ENCODE measurements at regions of chr2 and their contacts with region 1.

Region 1: DNA sequence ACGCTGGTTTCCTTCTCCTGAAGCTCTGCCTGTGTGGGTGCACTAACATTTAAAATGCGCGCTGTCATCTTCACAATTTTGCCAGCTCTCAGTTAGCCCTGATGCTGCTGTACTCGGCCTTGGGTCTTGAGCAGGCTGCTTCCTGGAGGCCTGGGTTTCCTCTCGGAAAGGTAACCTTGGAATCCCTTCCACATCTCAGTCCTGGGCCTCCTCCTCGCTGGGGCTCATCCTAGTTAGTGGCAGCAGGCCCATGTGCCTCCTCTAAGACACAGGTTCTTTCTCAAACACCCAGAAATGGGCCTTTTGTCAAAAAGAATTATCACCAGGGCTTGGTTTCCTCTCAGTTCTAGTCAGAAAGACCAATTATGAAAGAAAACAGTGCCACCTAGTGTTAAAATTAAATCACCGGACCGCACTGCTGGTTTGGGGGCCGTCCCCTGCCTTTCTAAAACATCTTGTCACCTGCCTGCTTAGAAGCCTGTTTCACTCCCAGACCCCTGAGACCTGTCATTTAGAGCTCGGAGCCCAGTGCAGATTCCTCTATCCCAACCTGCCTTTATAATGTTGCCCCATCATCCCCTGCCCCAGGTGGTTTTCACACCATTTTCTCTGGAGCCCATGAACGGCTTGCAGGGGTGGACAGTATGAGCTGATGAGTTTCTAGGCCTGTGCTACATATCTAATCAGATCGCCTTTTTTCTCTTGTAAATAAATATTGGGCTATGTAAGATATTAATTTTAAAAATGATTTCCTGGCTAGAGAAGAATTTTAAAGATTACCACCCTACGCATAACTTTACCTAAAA is 42.4 kb downstream of the HK2 start:
- DNase-seq: no peak
- H3K4me3 ChIP-seq: no peak overlapping the region
- CTCF ChIP-seq: peak; percentile 49

Region 2: GRCh38 chr2:74602586-74603281 is 273.6 kb before region 1 on chr2:
- CTCF ChIA-PET with region 1: no interaction called
- POLR2A ChIA-PET with region 1: no interaction called
- DNase-seq: peak; percentile 21
- H3K4me3 ChIP-seq: no peak overlapping the region
- CTCF ChIP-seq: no peak

Region 3: GRCh38 chr2:74675090-74675489 is 201.2 kb before region 1 on chr2:
- CTCF ChIA-PET with region 1: interaction called, 16 read pairs
- POLR2A ChIA-PET with region 1: no interaction called
- DNase-seq: no peak
- H3K4me3 ChIP-seq: no peak overlapping the region
- CTCF ChIP-seq: no peak

Region 4: GRCh38 chr2:74696829-74697228 is 179.5 kb before region 1 on chr2:
- CTCF ChIA-PET with region 1: interaction called, 142 read pairs
- POLR2A ChIA-PET with region 1: no interaction called
- DNase-seq: no peak
- H3K4me3 ChIP-seq: no peak overlapping the region
- CTCF ChIP-seq: no peak

Region 5: DNA sequence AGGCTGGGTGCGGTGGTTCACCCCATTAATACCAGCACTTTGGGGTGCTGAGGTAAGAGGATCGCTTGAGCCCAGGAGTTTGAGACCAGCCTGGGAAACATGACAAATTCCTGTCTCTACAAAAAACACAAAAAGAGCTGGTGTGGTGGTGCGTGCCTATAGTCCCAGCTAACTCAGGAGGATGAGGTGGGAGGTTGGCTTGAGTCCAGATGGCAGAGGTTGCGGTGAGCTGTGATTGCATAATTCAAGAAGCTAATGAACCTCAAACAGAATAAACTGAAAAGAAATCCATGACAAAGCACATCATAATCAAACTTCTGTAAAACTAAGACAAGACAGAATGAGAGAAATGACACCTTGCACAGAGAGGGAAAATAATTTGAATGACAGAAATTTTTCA is 167.4 kb before region 1 on chr2:
- CTCF ChIA-PET with region 1: interaction called, 225 read pairs
- POLR2A ChIA-PET with region 1: no interaction called
- DNase-seq: no peak
- H3K4me3 ChIP-seq: no peak overlapping the region
- CTCF ChIP-seq: no peak

Region 6: DNA sequence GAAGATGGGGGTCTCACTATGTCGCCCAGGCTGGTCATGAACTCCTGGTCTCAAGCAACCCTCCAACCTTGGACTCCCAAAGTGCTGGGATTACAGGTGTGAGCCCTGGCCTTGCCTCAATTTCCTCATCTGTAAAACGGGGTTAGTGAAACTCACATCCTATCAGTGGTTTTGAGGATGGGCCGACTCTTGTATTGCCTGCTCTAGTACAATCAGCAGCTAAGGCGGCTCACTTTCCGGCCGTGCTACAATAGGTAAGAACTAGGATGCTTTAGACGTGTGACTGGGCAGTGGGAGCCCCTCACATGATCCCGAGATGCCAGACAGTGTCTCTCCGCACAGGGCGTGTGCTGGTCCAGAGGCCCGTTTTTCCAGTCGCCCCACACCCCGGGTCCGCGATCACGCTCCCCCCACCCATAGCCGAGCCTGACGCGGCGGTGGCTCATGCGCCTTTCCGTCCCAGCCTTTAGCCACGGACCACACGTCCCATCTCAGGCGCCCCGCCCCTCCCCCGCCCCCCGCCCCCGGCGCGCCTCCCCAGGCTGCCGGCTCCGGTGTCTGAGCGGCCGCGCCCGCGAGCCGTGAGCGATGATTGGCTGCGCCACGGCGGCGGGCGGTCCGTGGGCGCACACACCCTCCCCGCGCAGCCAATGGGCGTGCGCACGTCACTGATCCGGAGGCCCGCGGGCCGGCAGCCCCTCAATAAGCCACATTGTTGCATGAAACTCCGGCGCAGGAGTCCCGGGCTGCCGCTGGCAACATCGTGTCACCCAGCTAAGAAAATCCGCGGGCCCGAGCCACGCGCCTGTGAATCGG is 42.7 kb before region 1 on chr2 and contains the start of gene HK2:
- CTCF ChIA-PET with region 1: interaction called, 34 read pairs
- POLR2A ChIA-PET with region 1: no interaction called
- DNase-seq: no peak
- H3K4me3 ChIP-seq: peak within 1 kb of the TSS; percentile 93
- CTCF ChIP-seq: no peak

Region 7: DNA sequence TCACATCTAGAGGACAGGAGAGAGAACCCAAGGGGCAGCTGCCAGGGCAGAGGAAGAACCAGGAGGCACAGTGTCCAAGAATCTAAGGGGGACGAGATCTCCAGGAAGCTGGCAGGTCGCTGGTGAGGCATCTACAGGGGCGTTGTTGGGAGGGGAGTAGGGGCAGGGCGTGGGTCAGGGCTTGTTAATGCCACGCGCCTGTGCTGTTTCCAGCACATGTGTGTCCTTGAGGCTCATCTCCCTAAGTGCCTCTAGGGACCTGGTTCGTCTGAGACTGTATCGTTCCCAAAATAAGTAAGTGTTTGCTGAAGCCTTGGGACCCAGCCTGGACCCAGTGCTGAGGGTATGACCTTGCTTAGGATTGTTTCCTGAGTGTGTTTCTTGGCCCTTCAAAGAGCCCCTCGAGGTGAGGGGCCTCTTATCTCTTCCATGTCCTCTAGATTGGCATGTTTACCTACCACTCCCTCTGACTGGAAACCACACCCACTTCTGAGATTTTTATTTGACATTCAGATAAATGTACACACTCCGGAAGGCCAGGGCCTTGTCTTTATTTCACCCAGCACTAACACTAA is 20.2 kb before region 1 on chr2:
- CTCF ChIA-PET with region 1: interaction called, 18 read pairs
- POLR2A ChIA-PET with region 1: no interaction called
- DNase-seq: no peak
- H3K4me3 ChIP-seq: no peak overlapping the region
- CTCF ChIP-seq: no peak

Region 8: DNA sequence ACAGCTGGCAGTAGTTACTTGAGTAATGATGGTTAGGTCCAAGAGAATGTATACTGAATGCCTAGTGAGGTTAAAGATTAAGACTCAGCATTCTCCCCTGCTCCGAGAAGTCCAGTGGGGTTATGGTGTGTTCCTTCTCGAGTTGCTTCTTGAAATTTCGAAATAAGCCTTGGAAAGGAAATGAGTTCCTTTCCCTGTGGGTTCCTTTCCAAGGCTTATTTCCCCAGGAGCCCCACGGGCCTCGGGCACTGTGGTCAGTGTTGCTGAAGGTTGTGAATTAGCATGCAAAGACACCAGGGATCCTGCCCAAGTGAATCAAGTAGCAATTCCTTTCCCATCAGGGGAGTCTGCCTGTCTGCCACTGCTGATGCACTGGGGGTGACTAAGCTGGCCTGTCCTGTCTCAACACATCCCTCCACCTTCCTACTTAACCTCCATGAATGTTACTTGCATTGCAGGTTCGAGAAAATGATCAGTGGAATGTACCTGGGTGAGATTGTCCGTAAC is 11.2 kb after region 1 on chr2:
- CTCF ChIA-PET with region 1: interaction called, 43 read pairs
- POLR2A ChIA-PET with region 1: no interaction called
- DNase-seq: peak; percentile 67
- H3K4me3 ChIP-seq: no peak overlapping the region
- CTCF ChIP-seq: no peak

Measured in AG04449 (cell line).